K562 (cell line): ENCODE measurements at regions of chr19 and their contacts with region 1.

Region 1: DNA sequence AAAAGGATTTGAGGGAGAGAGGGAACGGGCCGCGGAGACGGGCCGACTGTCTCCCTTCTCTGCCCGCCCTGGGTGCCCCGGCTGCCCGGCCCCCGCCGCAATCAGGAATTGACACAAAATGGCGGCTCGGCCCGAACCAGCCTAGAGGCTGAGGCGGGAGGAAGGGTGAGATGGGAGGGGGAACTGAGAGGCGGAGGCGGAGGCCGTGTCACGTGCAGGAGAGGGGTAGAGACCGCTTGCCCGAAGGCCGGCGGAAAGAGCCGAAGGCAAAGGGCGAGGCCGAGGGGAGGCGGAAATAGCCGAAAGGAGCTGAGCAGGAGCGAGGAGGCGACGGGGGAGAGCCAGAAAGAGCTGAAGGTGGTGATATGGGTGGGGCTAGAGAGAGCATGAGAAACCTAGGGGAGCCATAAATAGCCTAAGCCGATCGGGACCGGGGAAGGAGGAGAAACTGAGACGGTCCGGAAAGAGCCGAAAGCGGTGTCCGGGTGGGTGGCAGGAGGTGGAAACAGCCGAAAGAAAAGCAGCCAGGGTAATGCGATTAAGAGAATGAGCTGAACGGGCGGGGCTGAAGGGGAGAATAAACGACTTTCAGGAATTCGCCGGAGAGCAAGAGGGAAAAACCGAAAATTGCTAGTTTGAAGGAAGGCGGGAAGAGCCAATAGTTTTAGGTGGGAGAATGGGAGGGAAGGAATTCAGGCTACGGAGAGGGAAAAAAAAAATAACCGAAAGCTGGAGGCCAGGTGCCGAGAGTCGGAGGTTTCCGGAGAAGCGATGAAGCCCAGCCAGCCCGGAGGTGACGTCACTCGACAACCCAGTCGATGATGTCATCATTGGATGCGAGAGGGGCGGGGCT is at the start of gene ZC3H4:
- DNase-seq: peak; percentile 91 to 99 (median 94)
- ATAC-seq: peak; percentile 88
- H3K4me3 ChIP-seq: peak within 1 kb of the TSS; percentile 89
- H3K27ac ChIP-seq: peak within 1 kb of the TSS; percentile 96
- H3K4me1 ChIP-seq: peaks cover 14 to 20% of the 10 kb centered on the region in 2 experiments
- H3K27me3 ChIP-seq: no peaks in the 10 kb centered on the region
- CTCF ChIP-seq: no peak
- EP300 ChIP-seq: no peak
- POLR2A ChIP-seq: peak; percentile 92
- RAD21 ChIP-seq: no peak
- polyA plus RNA-seq, gene ZC3H4: 2.2 to 8.0 TPM

Region 2: DNA sequence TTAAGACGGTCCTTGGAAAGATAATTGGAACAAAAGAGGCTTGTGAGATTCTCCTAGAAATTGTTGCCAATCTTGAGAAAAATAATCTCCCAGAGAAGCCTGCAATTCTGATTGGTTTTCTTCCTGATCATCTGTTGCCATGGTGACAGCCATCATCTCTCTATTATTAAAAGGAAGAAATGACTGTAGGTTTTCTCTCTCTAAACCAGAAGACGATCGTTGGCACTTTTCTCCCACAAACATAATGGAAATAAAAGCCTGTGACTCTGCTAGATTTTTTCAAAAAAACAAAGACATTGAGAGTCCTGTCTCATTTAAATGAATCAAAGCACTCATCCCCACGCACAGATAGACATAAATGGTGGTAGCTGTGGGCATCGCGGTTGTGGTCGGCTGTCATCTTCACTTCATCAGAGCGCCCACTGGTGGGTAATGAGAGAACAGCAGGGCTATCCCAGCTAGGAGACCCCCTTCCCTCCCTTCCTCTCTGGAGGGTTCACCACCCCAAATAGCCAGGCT is 533.8 kb before region 1 on chr19:
- CTCF ChIA-PET with region 1: no interaction called
- POLR2A ChIA-PET with region 1: no interaction called
- in situ Hi-C with region 1: no loop called
- intact Hi-C with region 1: no loop called
- DNase-seq: peak in 1 of 4 experiments; percentile 17
- ATAC-seq: no peak
- H3K4me3 ChIP-seq: no peak overlapping the region
- H3K27ac ChIP-seq: no peak overlapping the region
- H3K4me1 ChIP-seq: peaks cover 1 to 8% of the 10 kb centered on the region in 2 experiments; a peak in 3 of 5 replicates
- H3K27me3 ChIP-seq: no peaks in the 10 kb centered on the region
- CTCF ChIP-seq: no peak
- EP300 ChIP-seq: no peak
- POLR2A ChIP-seq: no peak
- RAD21 ChIP-seq: no peak

Region 3: GRCh38 chr19:46860125-46860845 is 252.9 kb before region 1 on chr19:
- CTCF ChIA-PET with region 1: no interaction called
- POLR2A ChIA-PET with region 1: interaction called, 3 read pairs
- in situ Hi-C with region 1: no loop called
- intact Hi-C with region 1: loop called (anchors 5 kb)
- DNase-seq: peak; percentile 93 to 99 (median 95)
- ATAC-seq: peak; percentile 86
- H3K4me3 ChIP-seq: peak overlapping the region; percentile 73
- H3K27ac ChIP-seq: peak overlapping the region; percentile 99
- H3K4me1 ChIP-seq: peaks cover 31 to 33% of the 10 kb centered on the region in 2 experiments; a peak in 4 of 5 replicates
- H3K27me3 ChIP-seq: no peaks in the 10 kb centered on the region
- CTCF ChIP-seq: no peak
- EP300 ChIP-seq: no peak; the same call in 1 of the 2 replicates
- POLR2A ChIP-seq: peak; percentile 95
- RAD21 ChIP-seq: 0 out of 4 replicates have a peak, but pooled peaks have one; percentile 11

Region 4: DNA sequence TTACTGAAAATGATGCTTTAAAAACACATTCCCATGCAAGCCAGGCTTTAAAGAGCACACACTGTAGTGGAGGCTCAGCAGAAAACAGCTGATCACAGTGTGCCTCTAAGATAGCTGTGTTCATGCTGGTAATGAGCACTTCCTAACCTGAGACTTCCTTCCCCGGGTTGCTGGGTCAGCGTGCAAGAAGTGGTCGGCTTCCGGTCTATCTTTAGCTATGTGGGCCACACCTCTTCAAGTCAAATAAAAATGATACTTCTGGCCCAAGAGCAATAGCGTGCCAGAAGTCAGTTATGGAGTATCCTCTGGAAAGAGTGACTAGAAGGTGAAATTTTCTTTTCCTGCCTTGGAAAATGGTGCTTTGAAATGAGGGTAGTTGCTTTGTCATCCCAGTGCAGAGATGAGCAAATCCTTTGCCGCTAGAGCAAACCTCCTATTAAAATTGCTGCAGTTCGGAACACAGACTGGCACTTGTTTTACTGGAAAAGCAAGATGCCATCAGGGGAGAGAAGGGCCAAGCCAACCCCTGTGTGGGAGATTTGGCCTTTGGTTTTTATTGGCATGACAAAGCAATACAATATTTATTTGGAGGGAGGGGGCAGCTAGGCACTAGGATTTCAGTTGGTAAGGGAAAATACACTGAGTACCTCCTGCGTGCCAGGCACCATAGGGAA is 188.2 kb before region 1 on chr19:
- CTCF ChIA-PET with region 1: no interaction called
- POLR2A ChIA-PET with region 1: no interaction called
- in situ Hi-C with region 1: no loop called
- intact Hi-C with region 1: no loop called
- DNase-seq: peak; percentile 55 to 76 (median 65)
- ATAC-seq: peak; percentile 94
- H3K4me3 ChIP-seq: no peak overlapping the region
- H3K27ac ChIP-seq: peak overlapping the region; percentile 3; the same call in 2 of the 3 replicates
- H3K4me1 ChIP-seq: peaks cover 0 to 28% of the 10 kb centered on the region in 2 experiments; a peak in 3 of 5 replicates
- H3K27me3 ChIP-seq: no peaks in the 10 kb centered on the region
- CTCF ChIP-seq: no peak
- EP300 ChIP-seq: peak; percentile 21; the same call in 1 of the 2 replicates
- POLR2A ChIP-seq: no peak
- RAD21 ChIP-seq: no peak

Region 5: GRCh38 chr19:47073574-47073973 is 39.6 kb before region 1 on chr19:
- CTCF ChIA-PET with region 1: no interaction called
- POLR2A ChIA-PET with region 1: no interaction called
- in situ Hi-C with region 1: no loop called
- intact Hi-C with region 1: no loop called
- DNase-seq: no peak
- ATAC-seq: no peak
- H3K4me3 ChIP-seq: no peak overlapping the region
- H3K27ac ChIP-seq: no peak overlapping the region
- H3K4me1 ChIP-seq: peaks cover 0 to 16% of the 10 kb centered on the region in 2 experiments; a peak in 1 of 5 replicates
- H3K27me3 ChIP-seq: no peaks in the 10 kb centered on the region
- CTCF ChIP-seq: no peak
- EP300 ChIP-seq: no peak
- POLR2A ChIP-seq: no peak; the same call in 1 of the 2 replicates
- RAD21 ChIP-seq: no peak

Region 6: GRCh38 chr19:47094557-47095475 is 18.4 kb before region 1 on chr19:
- CTCF ChIA-PET with region 1: no interaction called
- POLR2A ChIA-PET with region 1: interaction called, 17 read pairs
- in situ Hi-C with region 1: no loop called
- intact Hi-C with region 1: no loop called
- DNase-seq: no peak
- ATAC-seq: no peak
- H3K4me3 ChIP-seq: no peak overlapping the region
- H3K27ac ChIP-seq: peak overlapping the region; percentile 15; the same call in 2 of the 3 replicates
- H3K4me1 ChIP-seq: peaks cover 10 to 29% of the 10 kb centered on the region in 2 experiments; a peak in 4 of 5 replicates
- H3K27me3 ChIP-seq: no peaks in the 10 kb centered on the region
- CTCF ChIP-seq: no peak
- EP300 ChIP-seq: no peak
- POLR2A ChIP-seq: no peak
- RAD21 ChIP-seq: no peak

Region 7: GRCh38 chr19:47130591-47131227 is 17.5 kb after region 1 on chr19 and contains the start of gene SAE1:
- CTCF ChIA-PET with region 1: interaction called, 5 read pairs
- POLR2A ChIA-PET with region 1: interaction called, 26 read pairs
- in situ Hi-C with region 1: no loop called
- intact Hi-C with region 1: loop called (anchors 2 kb)
- DNase-seq: peak; percentile 96 to 99 (median 98)
- ATAC-seq: peak; percentile 90
- H3K4me3 ChIP-seq: peak within 1 kb of the TSS; percentile 68
- H3K27ac ChIP-seq: peak within 1 kb of the TSS; percentile 92
- H3K4me1 ChIP-seq: peaks cover 20 to 31% of the 10 kb centered on the region in 2 experiments; a peak in 4 of 5 replicates
- H3K27me3 ChIP-seq: no peaks in the 10 kb centered on the region
- CTCF ChIP-seq: peak; percentile 67 to 70 (median 69)
- EP300 ChIP-seq: peak; percentile 32; the same call in 1 of the 2 replicates
- POLR2A ChIP-seq: peak; percentile 94
- RAD21 ChIP-seq: peak; percentile 27 to 44
- polyA plus RNA-seq, gene SAE1: 82.8 to 133 TPM

Region 8: DNA sequence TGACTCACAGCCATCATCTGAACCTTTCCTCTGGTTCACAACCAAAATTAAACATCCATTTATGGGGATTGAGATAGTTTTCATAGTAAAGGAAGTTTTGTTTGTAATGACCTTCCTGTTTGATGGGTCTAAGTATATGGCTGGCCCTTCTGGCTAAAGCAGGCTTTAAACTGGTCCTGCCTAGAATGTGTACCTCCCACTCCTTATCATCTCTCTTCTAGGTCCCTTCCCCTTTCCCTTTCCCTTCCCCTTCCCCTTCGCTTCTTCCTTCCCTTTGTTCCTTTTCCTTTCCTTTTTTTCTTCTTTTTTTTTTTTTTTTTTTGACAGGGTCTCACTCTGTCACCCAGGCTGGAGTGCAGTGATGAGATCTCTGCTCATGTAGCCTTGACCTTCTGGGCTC is 82.2 kb after region 1 on chr19:
- CTCF ChIA-PET with region 1: no interaction called
- POLR2A ChIA-PET with region 1: no interaction called
- in situ Hi-C with region 1: no loop called
- intact Hi-C with region 1: no loop called
- DNase-seq: no peak
- ATAC-seq: no peak; the same call in 2 of the 3 replicates
- H3K4me3 ChIP-seq: no peak overlapping the region
- H3K27ac ChIP-seq: 0 out of 3 replicates have a peak overlapping the region, but pooled peaks have one; percentile 28
- H3K4me1 ChIP-seq: no peaks in the 10 kb centered on the region; a peak in 1 of 5 replicates
- H3K27me3 ChIP-seq: no peaks in the 10 kb centered on the region
- CTCF ChIP-seq: no peak
- EP300 ChIP-seq: no peak
- POLR2A ChIP-seq: no peak
- RAD21 ChIP-seq: no peak

Region 9: DNA sequence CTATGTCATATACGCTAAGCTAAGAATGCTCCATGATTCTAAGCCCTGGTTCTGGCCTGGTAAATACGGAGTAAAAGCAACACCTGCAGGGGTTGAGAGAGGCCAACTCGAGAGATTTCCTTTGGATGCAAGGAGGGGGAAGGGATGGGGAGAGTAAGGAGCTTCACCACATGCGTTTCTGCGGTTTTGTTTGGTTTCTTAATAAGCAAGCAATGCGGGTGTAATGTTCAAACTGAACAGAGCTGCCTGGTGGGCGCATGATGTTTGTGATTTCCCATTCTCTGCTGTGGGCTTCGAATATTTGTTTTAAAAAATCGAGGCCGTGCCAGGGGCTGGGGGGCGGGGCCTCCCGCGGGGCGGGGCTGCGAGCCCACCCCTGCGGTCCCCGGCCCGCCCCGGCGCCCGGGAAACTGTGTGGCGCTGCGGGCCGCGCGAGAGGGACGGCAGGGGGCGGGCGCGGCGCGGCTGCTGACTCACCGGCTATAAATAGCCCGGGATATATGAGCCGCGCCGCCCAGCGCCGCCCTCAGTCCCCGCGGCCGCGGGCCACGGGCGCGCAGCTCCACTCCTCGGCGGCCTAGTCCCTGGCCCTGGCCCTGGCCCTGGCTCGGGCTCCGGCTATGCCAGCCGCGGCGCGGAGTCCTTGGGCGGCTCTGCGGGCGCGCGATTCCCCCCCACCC is 112.7 kb after region 1 on chr19:
- CTCF ChIA-PET with region 1: no interaction called
- POLR2A ChIA-PET with region 1: interaction called, 13 read pairs
- in situ Hi-C with region 1: no loop called
- intact Hi-C with region 1: no loop called
- DNase-seq: peak; percentile 92 to 97 (median 92)
- ATAC-seq: peak; percentile 73
- H3K4me3 ChIP-seq: peak overlapping the region; percentile 100
- H3K27ac ChIP-seq: peak overlapping the region; percentile 93
- H3K4me1 ChIP-seq: peaks cover 16 to 67% of the 10 kb centered on the region in 2 experiments
- H3K27me3 ChIP-seq: no peaks in the 10 kb centered on the region
- CTCF ChIP-seq: peak in 2 of 3 experiments; percentile 49 to 57; a peak in 3 of 6 replicates
- EP300 ChIP-seq: peak; percentile 27
- POLR2A ChIP-seq: peak; percentile 96; the same call in 1 of the 2 replicates
- RAD21 ChIP-seq: peak in 1 of 2 experiments; percentile 11; a peak in 2 of 4 replicates